ENCODE measurements at regions of chr3 and their contacts with region 1.

Region 1: DNA sequence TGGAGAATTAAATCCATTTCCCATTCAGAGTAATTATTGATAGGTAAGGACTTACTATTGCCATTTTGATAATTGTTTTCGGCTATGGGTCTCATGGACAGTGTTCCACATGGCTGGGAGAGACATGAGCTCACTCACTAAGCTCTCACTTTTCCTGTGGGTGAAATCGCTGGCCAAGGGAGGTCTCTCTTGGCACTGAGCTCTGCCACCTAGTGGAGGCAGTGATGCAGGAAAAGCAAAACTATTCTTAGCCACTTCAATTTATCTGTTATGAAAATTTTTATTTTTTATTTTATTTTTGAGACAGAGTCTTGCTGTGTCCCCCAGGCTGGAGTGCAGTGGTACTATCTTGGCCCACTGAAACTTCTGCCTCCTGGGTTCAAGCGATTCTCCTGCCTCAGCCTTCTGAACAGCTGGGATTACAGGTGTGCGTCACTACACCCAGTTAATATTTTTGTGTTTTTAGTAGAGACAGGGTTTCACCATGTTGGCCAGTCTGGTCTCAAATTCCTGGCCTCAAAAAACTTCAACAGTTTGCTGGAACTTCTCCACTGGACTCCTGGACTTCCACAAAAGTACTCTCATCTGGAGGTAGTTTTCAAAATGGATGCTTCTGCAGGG is 4.7 kb upstream of the RNF13 start:
- DNase-seq: peak; percentile 73

Region 2: GRCh38 chr3:149765762-149766334 is 42.5 kb before region 1 on chr3:
- CTCF ChIA-PET with region 1: interaction called, 28 read pairs
- POLR2A ChIA-PET with region 1: interaction called, 4 read pairs
- DNase-seq: no peak

Region 3: GRCh38 chr3:149771652-149772271 is 36.6 kb before region 1 on chr3:
- CTCF ChIA-PET with region 1: interaction called, 28 read pairs
- POLR2A ChIA-PET with region 1: interaction called, 3 read pairs
- DNase-seq: peak; percentile 70

Region 4: GRCh38 chr3:149792452-149793270 is 15.7 kb before region 1 on chr3 and contains the start of gene ANKUB1:
- CTCF ChIA-PET with region 1: interaction called, 10 read pairs
- POLR2A ChIA-PET with region 1: no interaction called
- DNase-seq: no peak

Region 5: GRCh38 chr3:149820180-149820579 is 11.9 kb after region 1 on chr3:
- CTCF ChIA-PET with region 1: interaction called, 12 read pairs
- POLR2A ChIA-PET with region 1: interaction called, 5 read pairs
- DNase-seq: no peak

Measured in HEK293T (cell line).